Activated naive CD4-positive, alpha-beta T cell treated with anti-CD3 and anti-CD28 coated beads for 36 hours (primary cell): ENCODE measurements at regions of chr15 and their contacts with region 1.

Region 1: DNA sequence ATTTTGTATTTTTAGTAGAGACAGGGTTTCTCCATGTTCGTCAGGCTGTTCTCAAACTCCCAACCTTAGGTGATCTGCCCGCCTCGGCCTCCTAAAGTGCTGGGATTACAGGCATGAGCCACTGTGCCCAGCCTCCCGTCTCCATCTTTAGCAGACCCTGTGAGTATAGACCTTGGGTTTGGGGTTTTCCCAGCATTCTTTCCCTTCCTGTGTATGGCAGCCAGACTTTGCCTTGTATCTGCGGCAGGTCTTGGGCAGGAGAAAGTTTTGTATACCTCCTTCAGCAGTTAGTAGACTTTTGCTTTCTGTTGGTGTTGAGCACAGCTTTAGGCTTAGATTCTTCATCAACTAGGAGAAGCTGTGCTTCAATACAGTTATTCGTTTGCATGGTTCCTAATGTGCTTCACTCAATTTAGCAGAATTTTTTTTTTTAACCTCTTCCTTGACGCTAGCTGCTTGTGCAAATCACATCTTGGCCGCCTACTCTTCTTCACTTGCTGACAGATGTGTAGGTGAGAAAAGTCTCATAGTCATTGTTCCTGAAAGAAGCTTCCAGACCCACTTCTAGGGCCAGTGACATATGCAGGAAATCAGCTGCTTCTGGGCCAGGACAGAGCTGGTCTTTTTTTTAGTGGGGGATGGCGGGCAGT is 38.4 kb downstream of the MAP2K1 start:
- DNase-seq: peak; percentile 22
- H3K4me3 Mint-ChIP-seq: peak overlapping the region; percentile 42
- H3K27ac Mint-ChIP-seq: peak overlapping the region; percentile 77
- H3K4me1 Mint-ChIP-seq: peaks cover 55% of the 10 kb centered on the region
- H3K27me3 Mint-ChIP-seq: no peaks in the 10 kb centered on the region

Region 2: GRCh38 chr15:66356345-66357236 is 68.5 kb before region 1 on chr15 and contains the start of gene TIPIN:
- CTCF ChIA-PET with region 1: no interaction called
- intact Hi-C with region 1: no loop called
- DNase-seq: peak; percentile 99
- H3K4me3 Mint-ChIP-seq: peak within 1 kb of the TSS; percentile 96
- H3K27ac Mint-ChIP-seq: peak within 1 kb of the TSS; percentile 95
- H3K4me1 Mint-ChIP-seq: peaks cover 37% of the 10 kb centered on the region
- H3K27me3 Mint-ChIP-seq: no peaks in the 10 kb centered on the region
- total RNA-seq, gene TIPIN: 33.8 to 34.7 TPM

Region 3: GRCh38 chr15:66461917-66462316 is 36.8 kb after region 1 on chr15:
- CTCF ChIA-PET with region 1: no interaction called
- intact Hi-C with region 1: loop called (anchors 1 kb)
- DNase-seq: no peak
- H3K4me3 Mint-ChIP-seq: no peak overlapping the region
- H3K27ac Mint-ChIP-seq: no peak overlapping the region
- H3K4me1 Mint-ChIP-seq: peaks cover 14% of the 10 kb centered on the region
- H3K27me3 Mint-ChIP-seq: no peaks in the 10 kb centered on the region